Mammary epithelial cell (primary cell): ENCODE measurements at regions of chr2 and their contacts with region 1.

Region 1: GRCh38 chr2:112275306-112275886 is at the start of gene ZC3H6:
- DNase-seq: peak; percentile 95
- H3K4me3 ChIP-seq: peak within 1 kb of the TSS; percentile 91 to 99 (median 92)
- H3K27ac ChIP-seq: peak within 1 kb of the TSS; percentile 96
- H3K4me1 ChIP-seq: no peaks in the 10 kb centered on the region
- H3K27me3 ChIP-seq: no peaks in the 10 kb centered on the region
- CTCF ChIP-seq: peak in 1 of 2 donors; percentile 32
- total RNA-seq, gene ZC3H6: 6.0 to 10.6 TPM

Region 2: DNA sequence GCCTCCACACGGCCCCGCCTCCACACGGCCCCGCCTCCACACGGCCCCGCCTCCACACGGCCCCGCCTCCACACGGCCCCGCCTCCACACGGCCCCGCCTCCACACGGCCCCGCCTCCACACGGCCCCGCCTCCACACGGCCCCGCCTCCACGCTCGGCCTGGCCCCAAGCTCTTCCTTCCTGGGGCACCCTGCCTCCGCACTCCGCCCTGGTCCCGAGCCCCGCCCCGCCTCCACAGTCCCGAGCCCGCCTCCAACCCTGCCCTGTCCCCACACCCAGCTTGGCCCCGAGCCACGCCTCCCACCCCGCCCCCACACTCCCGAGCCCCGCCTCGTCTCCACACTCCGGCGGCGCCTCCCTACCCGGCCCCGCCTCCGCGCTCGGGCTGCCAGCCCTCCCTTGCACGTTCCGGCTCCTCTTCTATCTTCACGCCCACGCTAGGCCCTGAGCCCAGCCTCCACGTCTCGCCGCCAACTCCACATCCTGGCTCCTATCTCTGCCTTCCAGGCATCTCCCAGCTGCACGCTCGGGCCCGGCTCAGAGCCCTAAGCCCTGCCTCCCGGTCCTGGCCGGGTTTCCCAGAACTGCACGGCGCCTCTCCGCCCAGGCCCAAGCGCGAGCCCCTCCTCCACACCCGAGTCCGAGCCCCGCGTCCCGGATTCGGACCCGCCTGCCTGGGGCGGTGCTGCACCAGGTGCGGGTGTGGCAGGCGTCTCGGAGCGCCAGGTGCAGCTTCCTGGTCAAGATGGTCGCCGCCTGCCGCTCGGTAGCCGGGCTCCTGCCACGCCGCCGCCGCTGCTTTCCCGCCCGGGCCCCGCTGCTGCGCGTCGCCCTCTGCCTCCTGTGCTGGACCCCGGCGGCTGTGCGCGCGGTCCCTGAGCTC is 220.3 kb before region 1 on chr2 and contains the start of gene TMEM87B:
- CTCF ChIA-PET with region 1: no interaction called
- dilution Hi-C with region 1: no loop called
- in situ Hi-C with region 1: no loop called
- intact Hi-C with region 1: loop called (anchors 5 kb)
- DNase-seq: peak; percentile 97
- H3K4me3 ChIP-seq: peak within 1 kb of the TSS; percentile 98 to 100 (median 100)
- H3K27ac ChIP-seq: peak within 1 kb of the TSS; percentile 81
- H3K4me1 ChIP-seq: peaks cover 21% of the 10 kb centered on the region
- H3K27me3 ChIP-seq: no peaks in the 10 kb centered on the region
- CTCF ChIP-seq: no peak
- total RNA-seq, gene TMEM87B: 35.0 to 51.7 TPM

Region 3: GRCh38 chr2:112345030-112346027 is 69.9 kb after region 1 on chr2:
- CTCF ChIA-PET with region 1: no interaction called
- dilution Hi-C with region 1: no loop called
- in situ Hi-C with region 1: no loop called
- intact Hi-C with region 1: loop called (anchors 5 kb)
- DNase-seq: no peak
- H3K4me3 ChIP-seq: no peak overlapping the region
- H3K27ac ChIP-seq: no peak overlapping the region
- H3K4me1 ChIP-seq: peaks cover 4% of the 10 kb centered on the region
- H3K27me3 ChIP-seq: no peaks in the 10 kb centered on the region
- CTCF ChIP-seq: no peak